Sciatic nerve (tissue), 2 donors: ENCODE measurements at regions of chr14 and their contacts with region 1.

Region 1: DNA sequence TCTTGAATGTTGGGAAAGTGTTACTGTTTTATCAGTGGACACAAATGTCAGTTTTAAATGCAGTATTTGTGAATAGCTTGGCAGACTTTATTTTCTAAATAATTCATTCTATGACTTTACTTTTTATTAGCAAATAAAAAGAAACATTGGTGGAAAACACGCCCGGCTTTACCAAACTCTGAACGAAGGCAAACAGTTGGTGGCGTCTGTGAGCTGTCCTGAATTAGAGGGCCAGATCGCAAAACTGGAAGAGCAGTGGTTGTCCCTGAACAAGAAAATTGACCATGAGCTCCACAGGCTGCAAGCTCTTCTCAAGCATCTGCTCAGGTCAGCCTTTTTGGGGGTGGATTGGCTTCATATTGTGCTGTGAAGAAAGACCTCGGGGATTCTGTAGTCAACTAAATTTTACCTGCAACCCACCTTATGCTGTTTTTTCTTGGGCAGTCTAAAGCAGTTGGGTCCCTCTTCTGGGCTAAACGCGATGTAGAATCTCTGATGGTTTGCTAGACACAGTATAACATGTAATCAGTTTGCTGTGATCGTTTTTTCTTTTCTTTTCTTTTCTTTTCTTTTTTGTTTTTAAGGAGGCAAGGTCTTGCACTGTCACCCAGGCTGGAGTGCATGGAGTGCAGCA is 156.4 kb downstream of the ESR2 start:
- DNase-seq: no peak
- ATAC-seq: no peak

Region 2: GRCh38 chr14:64170181-64170580 is 32.4 kb after region 1 on chr14:
- intact Hi-C with region 1: loop called (anchors 5 kb)
- DNase-seq: no peak
- ATAC-seq: no peak

Region 3: DNA sequence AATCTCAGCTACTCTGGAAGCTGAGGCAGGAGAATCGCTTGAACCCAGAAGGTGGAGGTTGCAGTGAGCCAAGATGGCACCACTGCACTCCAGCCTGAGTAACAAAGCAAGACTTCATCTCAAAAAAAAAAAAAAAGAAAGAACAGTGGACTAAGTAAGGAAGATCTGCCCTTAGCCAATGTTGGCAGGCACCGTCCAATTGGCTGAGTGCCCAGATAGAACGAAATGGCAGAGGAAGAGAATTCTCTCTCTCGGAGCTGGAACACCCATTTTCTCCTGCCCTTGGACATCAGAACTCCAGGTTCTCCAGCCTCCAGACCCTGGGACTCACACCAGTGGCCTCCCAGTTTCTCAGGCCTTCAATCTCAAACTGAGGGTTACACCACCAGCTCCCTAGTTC is 106.5 kb after region 1 on chr14:
- intact Hi-C with region 1: no loop called
- DNase-seq: no peak
- ATAC-seq: no peak